ENCODE measurements at regions of chr6 and their contacts with region 1.

Region 1: GRCh38 chr6:142146828-142147662 is at the starts of genes NMBR and VTA1:
- DNase-seq: peak; percentile 99
- H3K4me3 ChIP-seq: peak within 1 kb of the TSS; percentile 99
- CTCF ChIP-seq: peak; percentile 91

Region 2: DNA sequence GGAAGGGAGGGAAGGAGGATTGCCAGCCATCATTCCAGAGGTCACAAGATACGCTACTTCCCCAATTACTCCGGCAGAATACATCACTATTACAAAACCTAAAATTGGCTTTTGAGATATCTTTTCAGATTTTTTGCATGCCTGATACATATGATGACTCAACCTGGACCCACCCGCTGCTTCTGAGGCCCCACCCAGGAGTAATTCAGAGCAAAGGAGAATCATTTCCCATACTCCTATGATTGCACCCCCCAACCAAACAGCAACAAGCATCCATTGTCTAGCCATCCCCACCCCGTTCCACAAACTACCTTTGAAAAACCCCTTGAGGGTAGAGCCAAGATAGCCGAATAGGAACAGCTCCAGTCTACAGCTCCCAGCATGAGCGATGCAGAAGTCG is 177.8 kb before region 1 on chr6:
- in situ Hi-C with region 1: no loop called
- DNase-seq: no peak
- H3K4me3 ChIP-seq: no peak overlapping the region
- CTCF ChIP-seq: no peak

Region 3: DNA sequence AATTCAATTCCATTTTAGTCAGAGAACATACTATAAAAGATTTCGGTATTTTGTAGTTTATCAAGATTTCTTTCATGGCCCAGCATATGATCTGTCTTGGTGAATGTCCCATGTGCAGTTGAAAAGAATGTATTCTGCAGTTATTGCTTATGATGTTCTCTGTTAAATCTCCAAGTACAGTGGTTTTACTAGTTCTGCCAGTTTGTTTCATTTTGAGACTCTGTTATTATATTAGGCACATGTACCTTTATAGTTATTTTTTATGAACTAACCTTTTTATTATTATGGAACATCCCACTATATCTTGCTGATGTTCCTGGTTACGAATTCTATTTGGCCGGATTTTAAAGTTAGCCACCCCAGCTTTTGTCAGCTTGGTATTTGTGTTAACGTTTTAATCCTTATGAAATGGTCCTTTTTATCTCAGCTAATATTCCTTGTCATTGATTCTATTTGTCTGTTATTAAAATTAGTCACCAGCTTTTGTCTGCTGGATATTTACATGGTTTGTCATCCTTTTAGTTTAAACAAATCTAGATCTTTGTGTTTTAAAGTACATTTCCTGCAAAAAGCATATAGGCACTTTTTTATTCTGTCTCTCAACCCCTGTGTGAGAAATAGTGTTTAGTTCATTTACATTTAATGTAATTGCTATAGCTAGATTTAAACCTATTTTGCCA is 49.0 kb after region 1 on chr6:
- in situ Hi-C with region 1: no loop called
- DNase-seq: no peak
- H3K4me3 ChIP-seq: no peak overlapping the region
- CTCF ChIP-seq: no peak

Region 4: GRCh38 chr6:142374965-142375733 is 228.1 kb after region 1 on chr6:
- in situ Hi-C with region 1: loop called (anchors 5 kb)
- DNase-seq: no peak
- H3K4me3 ChIP-seq: no peak overlapping the region
- CTCF ChIP-seq: no peak

Measured in astrocyte of the cerebellum (primary cell).